Psoas muscle (tissue), 8 donors: ENCODE measurements at regions of chr21 and their contacts with region 1.

Region 1: DNA sequence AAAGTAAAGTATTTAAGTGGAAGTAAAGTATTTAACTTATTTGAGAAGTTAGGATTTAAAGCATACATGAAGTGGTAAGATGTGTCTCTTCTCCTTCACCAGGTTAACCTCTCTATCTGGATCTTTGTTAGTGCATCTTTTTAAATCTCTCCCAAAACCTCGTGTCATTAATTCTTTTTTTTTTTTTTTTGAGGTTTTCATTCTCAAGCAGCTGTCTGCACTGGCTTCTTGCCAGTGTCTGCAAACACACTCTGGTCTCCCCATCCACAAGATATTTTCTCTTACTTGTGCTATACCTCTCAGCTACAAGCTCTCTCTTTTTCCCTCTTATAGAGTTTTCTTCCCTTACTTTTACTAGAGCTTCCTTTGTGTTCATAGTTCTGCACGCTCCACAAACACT is 49.0 kb downstream of the CLDN17 start:
- DNase-seq: no peak
- ATAC-seq: no peak
- H3K4me3 ChIP-seq: no peak overlapping the region
- H3K27ac ChIP-seq: no peak overlapping the region
- H3K4me1 ChIP-seq: no peaks in the 10 kb centered on the region
- H3K27me3 ChIP-seq: no peaks in the 10 kb centered on the region
- CTCF ChIP-seq: no peak

Region 2: DNA sequence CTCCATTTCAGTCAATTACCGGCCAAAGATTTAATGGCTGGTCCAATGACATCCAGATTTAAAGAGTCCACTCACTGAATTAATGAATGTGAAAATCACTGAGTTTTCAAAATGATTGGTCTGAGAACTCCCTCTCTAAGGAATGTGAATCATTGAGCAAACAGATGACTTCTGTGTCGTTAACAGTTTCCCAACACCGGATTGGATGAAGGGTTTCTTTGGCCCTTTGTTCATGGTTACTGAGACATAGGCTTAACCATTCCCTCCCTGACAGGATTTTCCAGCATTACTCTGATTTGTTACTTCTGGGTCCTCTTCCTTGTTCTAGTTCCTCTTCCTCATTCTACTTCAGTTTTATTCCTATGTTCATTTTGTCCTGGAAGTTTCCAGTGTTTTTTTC is 50.5 kb after region 1 on chr21:
- intact Hi-C with region 1: loop called in 1 of 2 experiments (anchors 5 kb)
- DNase-seq: no peak
- ATAC-seq: no peak
- H3K4me3 ChIP-seq: no peak overlapping the region
- H3K27ac ChIP-seq: no peak overlapping the region
- H3K4me1 ChIP-seq: no peaks in the 10 kb centered on the region
- H3K27me3 ChIP-seq: no peaks in the 10 kb centered on the region
- CTCF ChIP-seq: no peak